OCI-LY7 (cell line): ENCODE measurements at regions of chr7 and their contacts with region 1.

Region 1: DNA sequence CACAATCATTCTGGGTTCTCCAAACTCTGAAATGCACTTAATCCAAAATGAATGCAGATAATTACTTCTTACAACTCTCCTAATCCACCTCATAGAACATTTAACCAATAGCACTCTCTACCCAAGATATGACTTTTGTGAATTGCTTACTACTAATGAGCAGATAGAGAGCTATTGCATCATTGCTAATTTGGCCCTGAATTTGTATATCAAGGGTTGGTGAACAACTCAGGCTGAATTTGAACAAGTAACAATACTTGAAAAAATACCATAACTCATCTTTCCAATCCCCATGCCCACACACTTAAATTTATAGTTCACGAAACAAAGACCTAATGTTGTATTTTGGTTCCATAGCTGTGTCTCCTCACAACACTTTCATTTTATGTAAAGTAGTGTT is 246.0 kb downstream of the TSPAN12 start:
- DNase-seq: no peak
- H3K4me3 ChIP-seq: no peak overlapping the region
- H3K27ac ChIP-seq: no peak overlapping the region
- H3K4me1 ChIP-seq: no peaks in the 10 kb centered on the region
- CTCF ChIP-seq: no peak

Region 2: DNA sequence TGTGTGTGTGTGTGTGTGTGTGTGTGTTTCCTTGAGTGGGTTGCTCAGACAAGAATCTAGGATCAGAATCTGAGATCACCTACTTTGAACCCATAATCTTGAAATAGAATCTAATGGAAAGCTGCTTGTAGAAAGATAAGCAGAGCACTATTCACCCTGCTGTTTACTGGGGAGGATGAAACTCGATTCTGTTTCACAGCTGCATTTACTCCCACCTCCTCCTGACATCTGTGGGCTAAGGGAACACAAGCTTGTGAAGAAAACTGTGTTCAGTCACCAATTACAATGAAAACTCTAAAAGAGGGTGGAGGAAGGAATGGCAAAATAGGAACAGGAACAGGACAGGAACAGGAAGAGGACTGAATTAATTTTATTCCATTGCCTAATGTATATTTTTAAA is 23.6 kb before region 1 on chr7:
- CTCF ChIA-PET with region 1: no interaction called
- POLR2A ChIA-PET with region 1: no interaction called
- intact Hi-C with region 1: loop called (anchors 1 kb)
- DNase-seq: no peak
- H3K4me3 ChIP-seq: no peak overlapping the region
- H3K27ac ChIP-seq: no peak overlapping the region
- H3K4me1 ChIP-seq: no peaks in the 10 kb centered on the region
- CTCF ChIP-seq: no peak